ENCODE measurements at regions of chr4 and their contacts with region 1.

Region 1: GRCh38 chr4:10207131-10207530 is 90.5 kb upstream of the WDR1 start:
- DNase-seq: no peak
- ATAC-seq: no peak

Region 2: GRCh38 chr4:10054571-10055041 is 152.5 kb before region 1 on chr4:
- intact Hi-C with region 1: no loop called
- DNase-seq: no peak
- ATAC-seq: peak; percentile 9

Region 3: GRCh38 chr4:10237131-10237530 is 30.0 kb after region 1 on chr4:
- intact Hi-C with region 1: loop called (anchors 1 kb)
- DNase-seq: no peak
- ATAC-seq: no peak

Measured in Right ventricle myocardium inferior (tissue), 1 donor.